MCF 10A (cell line): ENCODE measurements at regions of chr6 and their contacts with region 1.

Region 1: DNA sequence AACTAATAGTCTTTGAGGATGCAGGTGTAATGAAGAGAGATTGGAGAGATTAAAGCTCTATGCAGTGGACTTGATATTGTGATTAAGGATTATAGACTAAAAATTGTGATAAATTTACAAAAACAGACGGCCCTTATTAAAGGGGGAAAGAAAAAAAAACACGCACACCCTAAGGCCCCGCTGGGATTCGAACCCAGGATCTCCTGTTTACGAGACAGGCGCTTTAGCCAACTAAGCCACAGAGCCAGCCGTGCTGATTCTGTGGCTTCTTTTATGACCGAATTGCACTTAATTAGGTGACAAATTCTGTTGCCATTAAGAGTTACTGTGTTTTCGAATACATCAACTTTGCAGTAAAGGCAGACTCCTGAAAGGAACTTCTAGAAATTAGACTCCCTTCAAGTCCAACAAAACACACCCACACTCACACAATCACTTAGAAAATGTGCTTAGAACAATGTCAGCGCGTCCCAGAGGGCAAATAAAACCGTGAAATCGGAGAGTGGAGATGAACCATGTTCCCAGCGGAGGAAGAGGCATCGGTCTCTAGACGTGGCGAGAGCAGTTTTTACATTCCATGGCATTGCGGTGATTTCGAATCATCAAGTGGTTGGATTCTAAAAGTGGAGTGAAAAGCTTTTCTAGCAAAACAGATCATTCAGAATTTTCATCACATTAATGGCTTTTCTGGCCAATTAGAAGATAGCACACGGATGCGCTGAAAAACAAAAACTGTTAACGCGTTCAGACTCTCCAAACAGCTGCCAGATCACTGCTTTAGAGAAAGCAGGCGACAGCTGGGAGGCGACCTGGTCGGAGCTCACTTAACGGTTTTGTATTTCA is 122.6 kb downstream of the GPX5 start:
- DNase-seq: peak; percentile 84
- H3K4me3 Mint-ChIP-seq: peak overlapping the region; percentile 96
- H3K27ac Mint-ChIP-seq: peak overlapping the region; percentile 74
- H3K4me1 Mint-ChIP-seq: peaks cover 6% of the 10 kb centered on the region
- H3K27me3 Mint-ChIP-seq: no peaks in the 10 kb centered on the region
- CTCF ChIP-seq: no peak

Region 2: GRCh38 chr6:28597217-28598005 is 50.8 kb before region 1 on chr6:
- CTCF ChIA-PET with region 1: no interaction called
- POLR2A ChIA-PET with region 1: interaction called, 6 read pairs
- intact Hi-C with region 1: loop called (anchors 2 kb)
- DNase-seq: peak; percentile 73
- H3K4me3 Mint-ChIP-seq: peak overlapping the region; percentile 76
- H3K27ac Mint-ChIP-seq: peak overlapping the region; percentile 74
- H3K4me1 Mint-ChIP-seq: no peaks in the 10 kb centered on the region
- H3K27me3 Mint-ChIP-seq: no peaks in the 10 kb centered on the region
- CTCF ChIP-seq: no peak